ENCODE measurements at regions of chr1 and their contacts with region 1.

Region 1: DNA sequence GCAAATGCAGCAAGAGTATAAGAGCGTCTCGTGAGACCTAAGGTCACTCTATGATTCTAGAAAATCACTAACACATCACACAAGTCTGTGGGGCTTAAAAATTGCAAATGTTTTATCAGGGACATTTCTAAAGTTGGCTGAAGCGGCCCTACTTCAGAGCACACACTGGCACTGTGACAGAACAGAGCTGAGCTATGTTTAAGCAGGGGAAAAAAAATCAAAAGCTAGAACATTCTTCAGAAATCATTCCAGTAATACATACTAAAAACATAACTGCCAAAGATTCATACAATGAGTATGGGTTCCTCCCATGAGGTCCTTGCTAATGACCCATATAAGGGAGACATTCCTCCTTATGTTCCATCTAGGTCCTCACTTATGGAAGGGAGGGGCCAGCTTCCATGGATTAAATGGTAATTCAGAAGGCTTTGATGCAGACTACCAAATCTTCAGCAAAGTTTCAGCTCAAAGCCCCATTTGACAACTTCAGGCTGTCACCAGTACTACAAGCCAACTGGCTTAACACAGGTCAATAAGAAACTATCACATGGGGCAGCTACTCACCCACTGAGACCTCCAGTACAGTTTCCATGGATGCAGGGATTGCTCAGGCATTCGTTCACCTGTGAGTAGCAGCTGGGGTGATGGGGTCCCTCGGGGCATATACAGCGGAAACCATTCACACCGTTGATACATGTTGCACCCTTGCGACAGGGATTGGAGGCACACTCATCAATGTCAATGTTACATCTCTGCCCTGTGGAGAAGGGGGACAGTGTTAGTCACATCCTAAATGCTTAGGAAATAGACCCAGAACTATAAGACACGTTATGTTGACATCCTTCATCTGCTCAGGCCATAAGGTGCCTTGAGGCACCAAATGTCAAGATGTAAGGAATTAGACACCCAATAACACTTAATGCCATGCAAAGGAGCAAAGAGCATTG is 58.4 kb upstream of the ADAM30 start:
- DNase-seq: no peak
- H3K4me3 Mint-ChIP-seq: no peak overlapping the region
- H3K27ac Mint-ChIP-seq: no peak overlapping the region
- H3K4me1 Mint-ChIP-seq: peaks cover 14% of the 10 kb centered on the region
- H3K27me3 Mint-ChIP-seq: no peaks in the 10 kb centered on the region

Region 2: DNA sequence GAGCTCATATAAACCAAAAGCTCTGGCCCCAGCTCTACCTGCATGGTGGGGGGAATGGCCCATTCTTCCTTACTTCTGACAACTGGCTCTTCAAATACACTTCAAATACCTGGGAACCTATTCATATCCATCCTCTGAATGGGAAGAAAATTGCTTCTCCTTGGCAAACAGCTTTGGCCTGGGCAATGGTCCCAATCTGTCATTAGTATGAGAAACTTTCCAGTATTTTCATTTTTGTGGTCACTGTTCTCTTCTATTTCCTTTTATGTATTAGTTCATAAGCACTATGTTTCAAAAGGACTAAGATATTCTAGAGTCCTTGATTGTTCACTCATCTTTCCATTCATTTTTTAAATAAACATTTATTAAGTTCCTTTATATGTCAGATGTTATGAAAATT is 545.0 kb before region 1 on chr1:
- CTCF ChIA-PET with region 1: no interaction called
- POLR2A ChIA-PET with region 1: no interaction called
- intact Hi-C with region 1: no loop called
- DNase-seq: no peak
- H3K4me3 Mint-ChIP-seq: no peak overlapping the region
- H3K27ac Mint-ChIP-seq: no peak overlapping the region
- H3K4me1 Mint-ChIP-seq: no peaks in the 10 kb centered on the region
- H3K27me3 Mint-ChIP-seq: no peaks in the 10 kb centered on the region

Region 3: GRCh38 chr1:119906927-119907652 is 47.7 kb before region 1 on chr1:
- CTCF ChIA-PET with region 1: no interaction called
- POLR2A ChIA-PET with region 1: no interaction called
- intact Hi-C with region 1: no loop called
- DNase-seq: no peak
- H3K4me3 Mint-ChIP-seq: no peak overlapping the region
- H3K27ac Mint-ChIP-seq: no peak overlapping the region
- H3K4me1 Mint-ChIP-seq: no peaks in the 10 kb centered on the region
- H3K27me3 Mint-ChIP-seq: peaks cover 4% of the 10 kb centered on the region

Region 4: GRCh38 chr1:119968068-119968492 is 13.3 kb after region 1 on chr1:
- CTCF ChIA-PET with region 1: interaction called, 23 read pairs
- POLR2A ChIA-PET with region 1: no interaction called
- intact Hi-C with region 1: loop called (anchors 2 kb)
- DNase-seq: peak; percentile 89
- H3K4me3 Mint-ChIP-seq: no peak overlapping the region
- H3K27ac Mint-ChIP-seq: peak overlapping the region; percentile 25
- H3K4me1 Mint-ChIP-seq: peaks cover 6% of the 10 kb centered on the region
- H3K27me3 Mint-ChIP-seq: no peaks in the 10 kb centered on the region

Measured in activated CD4-positive, alpha-beta memory T cell treated with anti-CD3 and anti-CD28 coated beads for 36 hours (primary cell).